ENCODE measurements at regions of chr16 and their contacts with region 1.

Region 1: GRCh38 chr16:48385272-48386150 is at the start of gene SIAH1:
- DNase-seq: peak; percentile 97
- H3K4me3 Mint-ChIP-seq: peak within 1 kb of the TSS; percentile 92
- H3K27ac Mint-ChIP-seq: peak within 1 kb of the TSS; percentile 94
- H3K4me1 Mint-ChIP-seq: peaks cover 23% of the 10 kb centered on the region
- H3K27me3 Mint-ChIP-seq: no peaks in the 10 kb centered on the region
- total RNA-seq, gene SIAH1: 13.5 and 15.1 TPM in 2 replicates

Region 2: DNA sequence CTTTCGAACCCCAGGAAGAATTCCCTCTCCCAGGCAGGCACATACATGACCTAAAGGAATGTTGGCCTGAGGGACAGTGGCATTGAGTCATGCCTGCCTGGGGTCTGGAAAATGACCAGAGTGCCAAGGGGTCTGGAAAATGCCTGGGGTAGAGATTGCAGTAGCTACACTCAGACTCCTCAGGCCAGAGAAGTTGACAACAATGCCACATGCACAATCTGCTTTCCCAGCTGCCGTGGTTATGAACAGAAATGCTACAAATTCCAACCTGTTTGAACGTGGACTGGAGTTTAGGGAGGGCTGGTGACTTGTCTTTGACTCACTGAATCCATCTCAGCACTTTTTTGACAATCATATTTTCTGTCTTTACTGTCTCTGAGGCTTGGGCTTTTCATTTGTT is 479.7 kb before region 1 on chr16:
- intact Hi-C with region 1: no loop called
- DNase-seq: no peak
- H3K4me3 Mint-ChIP-seq: no peak overlapping the region
- H3K27ac Mint-ChIP-seq: no peak overlapping the region
- H3K4me1 Mint-ChIP-seq: no peaks in the 10 kb centered on the region
- H3K27me3 Mint-ChIP-seq: no peaks in the 10 kb centered on the region

Region 3: GRCh38 chr16:48276102-48276501 is 109.4 kb before region 1 on chr16:
- intact Hi-C with region 1: no loop called
- DNase-seq: no peak
- H3K4me3 Mint-ChIP-seq: no peak overlapping the region
- H3K27ac Mint-ChIP-seq: no peak overlapping the region
- H3K4me1 Mint-ChIP-seq: no peaks in the 10 kb centered on the region
- H3K27me3 Mint-ChIP-seq: no peaks in the 10 kb centered on the region

Region 4: DNA sequence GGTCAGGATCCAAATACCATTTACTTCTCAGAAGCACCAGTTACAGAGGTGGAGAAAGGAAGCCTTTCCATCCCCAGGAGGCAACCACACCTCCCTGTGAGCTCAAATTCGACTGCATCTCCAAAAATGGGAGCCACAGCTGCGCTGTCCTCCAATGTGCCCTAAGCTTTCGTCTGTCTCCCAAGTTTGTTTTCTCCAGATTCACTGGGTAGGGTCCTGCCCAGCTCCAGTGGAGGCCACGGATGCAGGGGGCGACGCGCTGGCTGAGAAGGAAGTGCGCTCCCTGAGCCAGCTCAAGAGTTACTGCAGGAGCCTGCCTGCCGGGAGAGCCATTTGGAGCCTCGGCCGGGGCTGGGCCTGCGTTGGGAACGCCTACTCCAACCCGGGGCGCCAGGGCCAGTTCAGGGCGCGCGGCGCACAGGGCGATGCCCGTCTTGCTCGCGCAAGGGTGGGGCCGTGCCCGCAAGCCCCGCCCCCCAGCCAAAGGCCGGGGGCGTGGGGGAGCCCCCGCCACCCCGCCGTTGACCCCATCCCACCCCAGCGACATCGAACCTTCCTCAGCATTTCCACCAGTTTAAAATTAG is 19.8 kb before region 1 on chr16:
- intact Hi-C with region 1: loop called (anchors 1 kb)
- DNase-seq: peak; percentile 95
- H3K4me3 Mint-ChIP-seq: peak overlapping the region; percentile 89
- H3K27ac Mint-ChIP-seq: peak overlapping the region; percentile 91
- H3K4me1 Mint-ChIP-seq: peaks cover 46% of the 10 kb centered on the region
- H3K27me3 Mint-ChIP-seq: no peaks in the 10 kb centered on the region

Region 5: GRCh38 chr16:48459167-48459566 is 73.7 kb after region 1 on chr16:
- intact Hi-C with region 1: loop called (anchors 5 kb)
- DNase-seq: no peak
- H3K4me3 Mint-ChIP-seq: no peak overlapping the region
- H3K27ac Mint-ChIP-seq: peak overlapping the region; percentile 22
- H3K4me1 Mint-ChIP-seq: peaks cover 12% of the 10 kb centered on the region
- H3K27me3 Mint-ChIP-seq: peaks cover 24% of the 10 kb centered on the region

Region 6: DNA sequence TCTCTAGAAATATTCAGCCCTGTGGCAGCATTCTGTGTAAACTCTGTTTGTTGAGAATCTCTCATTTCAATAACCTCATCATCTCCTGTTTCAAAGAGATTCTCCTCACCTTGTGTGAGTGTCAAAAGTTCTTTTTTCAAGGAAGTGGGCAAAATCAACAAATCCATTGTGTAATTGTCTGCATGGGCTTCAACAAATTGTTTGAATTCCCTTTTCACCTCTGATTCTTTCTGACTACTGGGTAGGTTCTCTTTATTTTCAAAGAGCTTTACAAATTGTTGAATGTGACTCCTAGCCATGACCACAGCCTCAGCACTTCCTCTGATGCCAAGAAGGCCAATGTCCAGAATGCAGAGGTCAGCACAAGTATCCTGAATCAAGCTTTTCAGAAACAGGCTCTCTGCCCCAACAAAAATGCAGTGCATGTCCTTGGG is 176.5 kb after region 1 on chr16:
- intact Hi-C with region 1: no loop called
- DNase-seq: no peak
- H3K4me3 Mint-ChIP-seq: no peak overlapping the region
- H3K27ac Mint-ChIP-seq: peak overlapping the region; percentile 64
- H3K4me1 Mint-ChIP-seq: peaks cover 52% of the 10 kb centered on the region
- H3K27me3 Mint-ChIP-seq: no peaks in the 10 kb centered on the region